Heart right ventricle (tissue), 16 donors: ENCODE measurements at regions of chr12 and their contacts with region 1.

Region 1: DNA sequence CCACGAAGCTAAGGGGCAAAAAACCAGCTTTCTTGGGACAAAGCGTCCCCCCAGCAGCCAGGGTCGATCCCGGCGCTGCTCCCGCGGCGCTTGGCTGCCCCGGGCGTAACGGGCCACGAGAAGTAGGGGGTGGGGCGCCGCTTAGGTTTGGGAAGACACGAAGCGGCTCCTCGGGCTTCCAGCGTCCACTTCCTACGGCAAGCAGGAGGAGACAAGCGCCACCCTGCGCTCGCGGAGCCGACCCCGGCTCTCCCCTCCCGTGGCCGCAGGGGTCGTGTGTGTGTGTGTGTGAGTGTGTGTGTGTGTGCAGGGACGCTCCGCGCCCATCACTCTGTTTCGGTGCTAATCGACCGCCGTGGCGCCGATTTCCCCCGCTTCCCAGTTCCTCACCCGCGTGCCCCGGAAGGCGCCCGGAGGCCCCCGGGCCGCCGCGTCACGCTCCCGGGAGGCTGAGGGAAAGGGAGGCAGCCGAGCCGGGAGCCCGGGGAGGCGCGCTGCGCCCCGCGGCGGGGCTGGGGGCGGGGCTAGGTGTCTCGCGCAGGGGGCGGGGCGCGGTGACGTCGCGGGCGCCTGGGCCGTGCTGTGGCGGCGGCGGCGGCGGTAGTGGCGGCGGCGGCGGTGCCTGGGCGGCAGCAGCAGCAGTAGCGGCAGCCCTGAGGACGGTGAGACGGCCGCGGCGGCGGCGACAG is at the start of gene ERC1:
- DNase-seq: peak; percentile 90 to 91
- ATAC-seq: peak; percentile 95 to 98 (median 96)
- H3K4me3 ChIP-seq: peak within 1 kb of the TSS; percentile 80 to 96 (median 90)
- H3K27ac ChIP-seq: peak within 1 kb of the TSS; percentile 94 to 100 (median 98)
- H3K4me1 ChIP-seq: peaks cover 0 to 49% (median 29%) of the 10 kb centered on the region in 9 donors
- H3K27me3 ChIP-seq: no peaks in the 10 kb centered on the region
- CTCF ChIP-seq: peak in 2 of 9 donors; percentile 9 to 34
- total RNA-seq, gene ERC1: 37.7 to 67.5 (median 49.5) TPM

Region 2: GRCh38 chr12:1054117-1054870 is 63.5 kb after region 1 on chr12:
- intact Hi-C with region 1: loop called in 1 of 10 experiments (anchors 10 kb)
- DNase-seq: peak in 1 of 2 donors; percentile 33
- ATAC-seq: peak in 6 of 8 donors; percentile 53 to 94 (median 82)
- H3K4me3 ChIP-seq: no peak overlapping the region
- H3K27ac ChIP-seq: peak overlapping the region; percentile 6 to 72 (median 60)
- H3K4me1 ChIP-seq: peaks cover 0 to 31% (median 18%) of the 10 kb centered on the region in 9 donors
- H3K27me3 ChIP-seq: no peaks in the 10 kb centered on the region
- CTCF ChIP-seq: no peak

Region 3: GRCh38 chr12:1073652-1074051 is 82.8 kb after region 1 on chr12:
- intact Hi-C with region 1: loop called in 1 of 10 experiments (anchors 10 kb)
- DNase-seq: no peak
- ATAC-seq: no peak
- H3K4me3 ChIP-seq: no peak overlapping the region
- H3K27ac ChIP-seq: no peak overlapping the region
- H3K4me1 ChIP-seq: peaks cover 0 to 48% (median 17%) of the 10 kb centered on the region in 9 donors
- H3K27me3 ChIP-seq: no peaks in the 10 kb centered on the region
- CTCF ChIP-seq: no peak

Region 4: GRCh38 chr12:1083889-1084262 is 93.1 kb after region 1 on chr12:
- intact Hi-C with region 1: loop called in 2 of 10 experiments (anchors 5 to 10 kb)
- DNase-seq: no peak
- ATAC-seq: peak in 3 of 8 donors; percentile 42 to 62 (median 50)
- H3K4me3 ChIP-seq: peak overlapping the region in 2 of 10 donors; percentile 0 to 23
- H3K27ac ChIP-seq: peak overlapping the region in 6 of 10 donors; percentile 4 to 50 (median 22)
- H3K4me1 ChIP-seq: peaks cover 0 to 15% (median 3%) of the 10 kb centered on the region in 9 donors
- H3K27me3 ChIP-seq: no peaks in the 10 kb centered on the region
- CTCF ChIP-seq: no peak

Region 5: GRCh38 chr12:1093166-1093751 is 102.5 kb after region 1 on chr12:
- intact Hi-C with region 1: loop called in 3 of 10 experiments (anchors 5 to 10 kb)
- DNase-seq: peak in 1 of 2 donors; percentile 51
- ATAC-seq: peak in 4 of 8 donors; percentile 56 to 77 (median 64)
- H3K4me3 ChIP-seq: no peak overlapping the region
- H3K27ac ChIP-seq: no peak overlapping the region
- H3K4me1 ChIP-seq: peaks cover 0 to 19% (median 7%) of the 10 kb centered on the region in 9 donors
- H3K27me3 ChIP-seq: no peaks in the 10 kb centered on the region
- CTCF ChIP-seq: peak; percentile 38 to 86 (median 72)

Region 6: DNA sequence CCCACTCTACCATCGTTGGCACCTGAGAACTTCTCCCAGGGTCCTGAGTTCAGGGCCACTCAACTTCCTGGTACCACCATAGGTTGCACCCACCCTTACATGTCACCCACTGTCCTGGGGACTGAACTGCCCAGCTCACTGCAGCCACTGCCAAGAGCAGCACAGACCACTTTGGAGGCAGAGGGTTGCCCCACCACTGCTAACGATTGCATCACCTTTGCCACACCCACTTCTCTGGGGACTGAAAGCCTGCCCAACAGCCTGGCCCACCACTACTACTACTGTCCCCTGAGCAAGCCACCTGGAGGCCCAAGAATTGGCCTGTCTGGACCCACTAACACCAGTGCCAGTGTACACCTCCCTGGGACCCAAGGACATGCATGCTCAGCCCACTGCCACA is 900.0 kb after region 1 on chr12:
- intact Hi-C with region 1: loop called in 1 of 10 experiments (anchors 5 kb)
- DNase-seq: no peak
- ATAC-seq: peak in 1 of 8 donors; percentile 20
- H3K4me3 ChIP-seq: no peak overlapping the region
- H3K27ac ChIP-seq: no peak overlapping the region
- H3K4me1 ChIP-seq: no peaks in the 10 kb centered on the region
- H3K27me3 ChIP-seq: peaks cover 0 to 6% (median 0%) of the 10 kb centered on the region in 7 donors
- CTCF ChIP-seq: no peak